Naive thymus-derived CD4-positive, alpha-beta T cell (primary cell): ENCODE measurements at regions of chr1 and their contacts with region 1.

Region 1: GRCh38 chr1:42816585-42817434 is at the starts of genes ERMAP and SVBP:
- DNase-seq: peak; percentile 86 to 98 (median 91)
- ATAC-seq: peak; percentile 97
- H3K4me3 ChIP-seq: peak within 1 kb of the TSS; percentile 69
- H3K4me3 Mint-ChIP-seq: peak within 1 kb of the TSS; percentile 76 to 90 (median 84)
- H3K27ac ChIP-seq: peak within 1 kb of the TSS; percentile 89
- H3K27ac Mint-ChIP-seq: peak within 1 kb of the TSS; percentile 64 to 94 (median 86)
- H3K4me1 ChIP-seq: peaks cover 6 to 10% of the 10 kb centered on the region in 2 donors
- H3K4me1 Mint-ChIP-seq: peaks cover 19 to 35% (median 29%) of the 10 kb centered on the region in 7 donors
- H3K27me3 ChIP-seq: no peaks in the 10 kb centered on the region
- H3K27me3 Mint-ChIP-seq: peaks cover 0 to 10% (median 0%) of the 10 kb centered on the region in 5 donors
- total RNA-seq, gene ERMAP: 6.1 to 10.3 (median 6.7) TPM
- total RNA-seq, gene SVBP: 12.7 to 22.2 (median 17.8) TPM

Region 2: DNA sequence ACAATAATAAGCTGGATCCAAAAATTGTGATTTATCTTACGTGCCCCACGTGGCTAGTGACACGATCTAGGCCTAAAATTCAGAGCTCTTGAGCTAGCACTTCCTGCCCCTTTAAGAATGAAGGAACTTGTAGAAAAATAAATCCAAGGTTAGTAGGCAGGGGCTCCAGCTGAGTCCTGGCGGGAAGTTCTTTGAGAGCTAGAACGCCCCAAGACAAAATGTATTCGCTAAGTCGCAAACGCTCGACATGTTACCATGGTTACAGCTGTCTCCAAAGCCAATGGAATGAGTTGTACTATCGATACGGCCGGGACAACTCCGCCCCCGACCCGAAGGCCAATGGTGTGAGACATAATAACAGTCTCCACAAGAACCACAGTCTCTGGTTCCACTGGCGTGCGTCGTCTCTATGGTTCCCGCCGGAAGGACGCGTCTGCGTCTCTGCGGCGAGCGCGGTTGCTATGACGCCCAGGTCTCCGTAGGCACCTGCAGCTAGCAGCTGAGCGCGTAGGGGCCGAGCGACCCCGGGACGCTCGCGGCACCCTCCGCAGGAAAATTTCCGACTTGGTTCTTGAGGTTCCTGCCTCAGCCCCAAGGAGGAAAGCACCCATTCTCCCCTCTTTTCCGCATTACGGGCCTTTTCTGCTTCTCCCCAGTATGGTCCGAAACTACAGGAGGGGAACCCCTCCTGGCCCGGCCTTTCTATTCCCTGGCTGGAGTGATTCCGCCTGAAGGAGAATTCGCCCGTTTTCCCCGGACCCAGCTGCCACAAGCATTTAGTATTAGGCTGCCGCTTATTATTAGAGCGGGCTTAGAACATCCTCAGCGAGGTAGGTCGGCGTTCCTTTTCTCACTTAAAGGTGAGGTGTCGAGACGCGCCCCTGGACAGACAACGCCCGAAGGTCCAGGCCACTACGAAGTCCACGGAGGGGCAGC is 353.7 kb before region 1 on chr1 and contains the start of gene CCDC30:
- CTCF ChIA-PET with region 1: no interaction called
- POLR2A ChIA-PET with region 1: no interaction called
- intact Hi-C with region 1: loop called in 1 of 2 experiments (anchors 2 kb)
- DNase-seq: peak; percentile 75 to 99 (median 98)
- ATAC-seq: peak; percentile 99
- H3K4me3 ChIP-seq: peak within 1 kb of the TSS; percentile 50
- H3K4me3 Mint-ChIP-seq: peak within 1 kb of the TSS; percentile 74 to 92 (median 86)
- H3K27ac ChIP-seq: peak within 1 kb of the TSS; percentile 86
- H3K27ac Mint-ChIP-seq: peak within 1 kb of the TSS; percentile 87 to 98 (median 93)
- H3K4me1 ChIP-seq: peaks cover 14 to 18% of the 10 kb centered on the region in 2 donors
- H3K4me1 Mint-ChIP-seq: peaks cover 14 to 57% (median 49%) of the 10 kb centered on the region in 7 donors
- H3K27me3 ChIP-seq: no peaks in the 10 kb centered on the region
- H3K27me3 Mint-ChIP-seq: peaks cover 0 to 20% (median 0%) of the 10 kb centered on the region in 5 donors
- total RNA-seq, gene CCDC30: 2.3 to 5.3 (median 4.2) TPM

Region 3: GRCh38 chr1:42657971-42658879 is 158.6 kb before region 1 on chr1 and contains the start of gene PPIH:
- CTCF ChIA-PET with region 1: no interaction called
- POLR2A ChIA-PET with region 1: interaction called, 3 read pairs
- intact Hi-C with region 1: loop called in 1 of 2 experiments (anchors 1 kb)
- DNase-seq: peak; percentile 82 to 94 (median 92)
- ATAC-seq: peak; percentile 99
- H3K4me3 ChIP-seq: peak within 1 kb of the TSS; percentile 90
- H3K4me3 Mint-ChIP-seq: peak within 1 kb of the TSS; percentile 94 to 99 (median 99)
- H3K27ac ChIP-seq: peak within 1 kb of the TSS; percentile 75
- H3K27ac Mint-ChIP-seq: peak within 1 kb of the TSS; percentile 84 to 98 (median 96)
- H3K4me1 ChIP-seq: peaks cover 17 to 22% of the 10 kb centered on the region in 2 donors
- H3K4me1 Mint-ChIP-seq: peaks cover 20 to 48% (median 44%) of the 10 kb centered on the region in 7 donors
- H3K27me3 ChIP-seq: no peaks in the 10 kb centered on the region
- H3K27me3 Mint-ChIP-seq: peaks cover 0 to 3% (median 0%) of the 10 kb centered on the region in 5 donors
- total RNA-seq, gene PPIH: 28.0 to 76.8 (median 40.7) TPM

Region 4: GRCh38 chr1:42766741-42767509 is 49.9 kb before region 1 on chr1 and contains the starts of genes C1orf50 and P3H1:
- CTCF ChIA-PET with region 1: no interaction called
- POLR2A ChIA-PET with region 1: interaction called, 50 read pairs
- intact Hi-C with region 1: loop called (anchors 1 kb)
- DNase-seq: peak; percentile 98 to 100 (median 100)
- ATAC-seq: peak; percentile 96
- H3K4me3 ChIP-seq: peak within 1 kb of the TSS; percentile 91
- H3K4me3 Mint-ChIP-seq: peak within 1 kb of the TSS in 1 of 10 donors; percentile 92
- H3K27ac ChIP-seq: peak within 1 kb of the TSS; percentile 84
- H3K27ac Mint-ChIP-seq: peak within 1 kb of the TSS in 8 of 9 donors; percentile 70 to 96 (median 92)
- H3K4me1 ChIP-seq: peaks cover 25 to 35% of the 10 kb centered on the region in 2 donors
- H3K4me1 Mint-ChIP-seq: peaks cover 20 to 50% (median 32%) of the 10 kb centered on the region in 7 donors
- H3K27me3 ChIP-seq: no peaks in the 10 kb centered on the region
- H3K27me3 Mint-ChIP-seq: no peaks in the 10 kb centered on the region
- total RNA-seq, gene C1orf50: 7.0 to 20.8 (median 18.1) TPM
- total RNA-seq, gene P3H1: 32.5 to 61.8 (median 47.3) TPM

Region 5: GRCh38 chr1:42784946-42785693 is 31.7 kb before region 1 on chr1 and contains the start of gene TMEM269:
- CTCF ChIA-PET with region 1: no interaction called
- POLR2A ChIA-PET with region 1: interaction called, 7 read pairs
- intact Hi-C with region 1: loop called in 1 of 2 experiments (anchors 2 kb)
- DNase-seq: peak; percentile 30 to 53 (median 45)
- ATAC-seq: peak; percentile 83
- H3K4me3 ChIP-seq: peak within 1 kb of the TSS; percentile 56
- H3K4me3 Mint-ChIP-seq: peak within 1 kb of the TSS; percentile 85 to 92 (median 89)
- H3K27ac ChIP-seq: peak within 1 kb of the TSS; percentile 29
- H3K27ac Mint-ChIP-seq: peak within 1 kb of the TSS; percentile 35 to 87 (median 65)
- H3K4me1 ChIP-seq: peaks cover 5 to 12% of the 10 kb centered on the region in 2 donors
- H3K4me1 Mint-ChIP-seq: peaks cover 12 to 34% (median 25%) of the 10 kb centered on the region in 7 donors
- H3K27me3 ChIP-seq: no peaks in the 10 kb centered on the region
- H3K27me3 Mint-ChIP-seq: no peaks in the 10 kb centered on the region
- total RNA-seq, gene TMEM269: 0.19 to 2.0 (median 0.35) TPM